ENCODE measurements at regions of chrX and their contacts with region 1.

Region 1: GRCh38 chrX:13000301-13000811 is 25.4 kb downstream of the TMSB4X start:
- DNase-seq: no peak
- ATAC-seq: peak; percentile 66
- H3K4me3 Mint-ChIP-seq: peak overlapping the region; percentile 64
- H3K27ac Mint-ChIP-seq: peak overlapping the region; percentile 92
- H3K4me1 Mint-ChIP-seq: peaks cover 72% of the 10 kb centered on the region
- H3K27me3 Mint-ChIP-seq: no peaks in the 10 kb centered on the region
- CTCF ChIP-seq: no peak

Region 2: GRCh38 chrX:12955882-12956703 is 44.3 kb before region 1 on chrX:
- CTCF ChIA-PET with region 1: interaction called, 6 read pairs
- POLR2A ChIA-PET with region 1: interaction called, 43 read pairs
- intact Hi-C with region 1: no loop called
- DNase-seq: no peak
- ATAC-seq: peak; percentile 45
- H3K4me3 Mint-ChIP-seq: peak overlapping the region; percentile 79
- H3K27ac Mint-ChIP-seq: peak overlapping the region; percentile 96
- H3K4me1 Mint-ChIP-seq: peaks cover 79% of the 10 kb centered on the region
- H3K27me3 Mint-ChIP-seq: no peaks in the 10 kb centered on the region
- CTCF ChIP-seq: no peak

Region 3: DNA sequence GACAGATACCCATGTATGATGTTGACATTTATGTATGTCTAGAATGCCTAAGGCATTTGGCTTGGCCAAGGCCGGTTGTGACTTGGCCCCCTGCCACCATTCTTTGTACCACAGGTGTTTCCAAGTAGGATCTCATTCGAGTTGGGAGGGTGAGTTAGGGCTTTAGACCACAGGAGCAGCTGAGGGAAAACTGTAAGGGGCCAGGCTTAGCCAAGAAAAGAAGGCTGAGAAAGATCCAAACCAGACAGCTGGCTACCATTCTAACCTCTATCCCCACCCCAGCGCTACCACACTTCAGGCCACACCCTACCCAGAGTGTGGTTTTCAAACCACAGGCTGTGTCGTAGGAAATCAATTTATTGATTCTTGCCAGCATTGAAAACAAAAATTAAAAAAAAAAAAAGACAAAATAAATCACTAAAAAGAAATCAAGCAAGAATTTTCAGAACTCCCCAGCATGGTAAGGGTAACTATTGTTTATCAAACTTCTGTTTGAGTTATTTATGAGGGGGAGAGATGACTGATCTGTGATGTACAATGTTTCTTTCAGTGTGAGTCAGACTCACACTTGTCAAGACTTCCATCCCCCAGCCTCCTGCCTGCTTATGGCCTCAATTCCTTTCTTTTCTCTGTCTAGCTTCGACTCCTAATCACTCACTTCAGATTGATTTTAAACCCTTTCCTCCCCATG is 15.6 kb before region 1 on chrX:
- CTCF ChIA-PET with region 1: interaction called, 4 read pairs
- POLR2A ChIA-PET with region 1: interaction called, 836 read pairs
- intact Hi-C with region 1: loop called (anchors 1 kb)
- DNase-seq: no peak
- ATAC-seq: peak; percentile 79
- H3K4me3 Mint-ChIP-seq: peak overlapping the region; percentile 53
- H3K27ac Mint-ChIP-seq: peak overlapping the region; percentile 91
- H3K4me1 Mint-ChIP-seq: peaks cover 62% of the 10 kb centered on the region
- H3K27me3 Mint-ChIP-seq: no peaks in the 10 kb centered on the region
- CTCF ChIP-seq: no peak

Region 4: DNA sequence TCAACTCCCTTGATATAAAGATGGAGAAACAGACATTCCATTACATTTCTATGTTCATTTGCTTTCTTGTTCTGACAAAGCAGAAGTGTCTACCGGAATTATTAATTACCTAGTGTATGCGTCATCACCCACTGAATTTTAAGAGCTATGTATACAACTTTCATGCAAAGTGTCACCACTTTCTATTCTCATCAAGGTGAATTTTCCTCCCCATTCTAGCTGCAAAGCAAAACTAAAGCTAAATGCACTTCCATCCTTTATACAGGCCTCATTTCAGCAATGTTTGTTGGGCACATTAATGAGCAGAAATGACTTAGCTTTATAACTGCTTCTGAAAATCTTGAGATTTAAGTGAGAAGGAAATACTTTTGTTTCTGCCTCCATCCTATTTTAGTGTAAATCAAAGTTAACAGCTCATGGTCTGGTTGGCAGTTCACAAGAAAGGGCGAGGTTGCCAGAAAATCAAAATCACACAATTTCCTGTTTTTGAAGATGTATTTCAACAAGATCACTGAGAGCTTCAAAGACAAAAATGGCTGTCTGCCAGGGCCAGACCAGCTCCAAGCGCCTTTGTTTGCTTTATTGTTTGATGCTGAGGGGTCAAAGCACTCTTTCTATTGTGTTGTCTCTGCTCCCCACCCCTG is 51.3 kb after region 1 on chrX:
- CTCF ChIA-PET with region 1: interaction called, 3 read pairs
- POLR2A ChIA-PET with region 1: interaction called, 7 read pairs
- intact Hi-C with region 1: loop called (anchors 2 kb)
- DNase-seq: no peak
- ATAC-seq: peak; percentile 71
- H3K4me3 Mint-ChIP-seq: peak overlapping the region; percentile 19
- H3K27ac Mint-ChIP-seq: peak overlapping the region; percentile 82
- H3K4me1 Mint-ChIP-seq: peaks cover 57% of the 10 kb centered on the region
- H3K27me3 Mint-ChIP-seq: no peaks in the 10 kb centered on the region
- CTCF ChIP-seq: no peak

Measured in activated B cell treated with CpG ODN at 0.5 μM for 24 hours (primary cell).